CD4-positive, alpha-beta T cell (primary cell): ENCODE measurements at regions of chr12 and their contacts with region 1.

Region 1: GRCh38 chr12:31250179-31250578 is 75.8 kb downstream of the SINHCAF start:
- DNase-seq: no peak
- ATAC-seq: no peak
- H3K4me3 ChIP-seq: no peak overlapping the region
- H3K4me3 Mint-ChIP-seq: no peak overlapping the region
- H3K27ac ChIP-seq: no peak overlapping the region
- H3K27ac Mint-ChIP-seq: no peak overlapping the region
- H3K4me1 ChIP-seq: no peaks in the 10 kb centered on the region
- H3K4me1 Mint-ChIP-seq: no peaks in the 10 kb centered on the region
- H3K27me3 ChIP-seq: no peaks in the 10 kb centered on the region
- H3K27me3 Mint-ChIP-seq: no peaks in the 10 kb centered on the region
- CTCF ChIP-seq: no peak

Region 2: DNA sequence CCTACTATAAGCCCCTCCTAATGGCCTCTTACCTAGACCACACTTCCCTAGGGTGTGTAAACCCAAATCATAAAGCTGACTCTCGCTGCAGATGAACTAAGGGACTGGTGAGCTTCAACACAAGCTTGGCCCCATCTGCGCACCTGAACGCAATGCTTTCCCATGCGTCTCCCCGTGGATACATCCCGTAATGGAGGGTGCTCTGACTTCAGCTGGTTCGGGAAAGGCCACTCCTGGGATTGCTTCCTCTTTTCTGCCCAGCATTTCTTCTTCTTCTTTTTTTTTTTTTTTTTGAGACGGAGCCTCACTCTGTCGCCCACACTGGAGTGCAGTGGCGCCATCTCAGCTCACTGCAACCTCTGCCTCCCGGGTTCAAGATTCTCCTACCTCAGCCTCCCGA is 381.6 kb after region 1 on chr12:
- CTCF ChIA-PET with region 1: no interaction called
- POLR2A ChIA-PET with region 1: no interaction called
- intact Hi-C with region 1: loop called (anchors 2 kb)
- DNase-seq: peak in 2 of 14 experiments; percentile 19 to 21
- ATAC-seq: no peak
- H3K4me3 ChIP-seq: no peak overlapping the region
- H3K4me3 Mint-ChIP-seq: no peak overlapping the region
- H3K27ac ChIP-seq: no peak overlapping the region
- H3K27ac Mint-ChIP-seq: no peak overlapping the region
- H3K4me1 ChIP-seq: peaks cover 2% of the 10 kb centered on the region
- H3K4me1 Mint-ChIP-seq: peaks cover 6% of the 10 kb centered on the region
- H3K27me3 ChIP-seq: no peaks in the 10 kb centered on the region
- H3K27me3 Mint-ChIP-seq: peaks cover 4% of the 10 kb centered on the region
- CTCF ChIP-seq: no peak